ENCODE measurements at regions of chr10 and their contacts with region 1.

Region 1: DNA sequence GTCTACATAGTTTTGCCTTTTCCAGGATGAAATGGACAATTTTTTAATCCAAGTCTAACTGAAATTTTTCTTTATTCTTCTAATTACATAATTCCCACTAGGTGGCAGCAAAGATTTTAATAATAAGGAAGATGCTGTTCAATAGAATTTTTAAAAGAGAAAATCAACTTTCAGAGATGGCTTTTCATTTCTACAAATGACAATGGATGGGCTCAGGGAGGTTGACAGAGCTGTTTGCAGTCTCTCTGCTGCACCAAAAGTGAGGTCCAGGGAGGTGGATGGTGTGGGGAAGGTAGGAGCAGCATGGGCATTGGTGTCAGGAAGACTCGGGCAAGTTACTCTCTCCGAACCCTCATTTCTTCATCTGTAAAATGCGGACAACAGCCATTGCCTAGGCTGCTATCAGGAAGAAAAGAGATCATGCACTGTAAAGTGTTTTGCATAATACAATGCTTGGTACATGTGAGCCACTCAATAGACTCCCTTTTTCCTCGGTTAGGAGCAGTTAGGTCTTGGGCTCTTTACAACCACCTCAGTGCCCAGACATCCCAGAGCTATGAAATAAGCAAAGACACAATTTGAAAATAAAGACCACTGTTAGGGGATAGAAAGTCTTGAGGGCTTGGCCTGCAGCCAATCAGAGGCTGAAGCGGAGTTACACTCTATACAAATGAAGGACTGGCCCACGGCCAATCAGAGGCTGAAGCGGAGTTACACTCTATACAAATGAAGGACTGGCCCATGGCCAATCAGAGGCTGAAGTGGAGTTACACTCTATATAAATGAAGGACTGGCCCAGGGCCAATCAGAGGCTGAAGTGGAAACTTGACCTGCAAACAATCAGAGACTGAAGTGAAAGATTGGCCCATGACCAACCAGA is 107.1 kb downstream of the ABLIM1 start:
- DNase-seq: no peak
- H3K4me3 Mint-ChIP-seq: no peak overlapping the region
- H3K27ac Mint-ChIP-seq: no peak overlapping the region
- H3K4me1 Mint-ChIP-seq: peaks cover 19% of the 10 kb centered on the region
- H3K27me3 Mint-ChIP-seq: peaks cover 2% of the 10 kb centered on the region

Region 2: DNA sequence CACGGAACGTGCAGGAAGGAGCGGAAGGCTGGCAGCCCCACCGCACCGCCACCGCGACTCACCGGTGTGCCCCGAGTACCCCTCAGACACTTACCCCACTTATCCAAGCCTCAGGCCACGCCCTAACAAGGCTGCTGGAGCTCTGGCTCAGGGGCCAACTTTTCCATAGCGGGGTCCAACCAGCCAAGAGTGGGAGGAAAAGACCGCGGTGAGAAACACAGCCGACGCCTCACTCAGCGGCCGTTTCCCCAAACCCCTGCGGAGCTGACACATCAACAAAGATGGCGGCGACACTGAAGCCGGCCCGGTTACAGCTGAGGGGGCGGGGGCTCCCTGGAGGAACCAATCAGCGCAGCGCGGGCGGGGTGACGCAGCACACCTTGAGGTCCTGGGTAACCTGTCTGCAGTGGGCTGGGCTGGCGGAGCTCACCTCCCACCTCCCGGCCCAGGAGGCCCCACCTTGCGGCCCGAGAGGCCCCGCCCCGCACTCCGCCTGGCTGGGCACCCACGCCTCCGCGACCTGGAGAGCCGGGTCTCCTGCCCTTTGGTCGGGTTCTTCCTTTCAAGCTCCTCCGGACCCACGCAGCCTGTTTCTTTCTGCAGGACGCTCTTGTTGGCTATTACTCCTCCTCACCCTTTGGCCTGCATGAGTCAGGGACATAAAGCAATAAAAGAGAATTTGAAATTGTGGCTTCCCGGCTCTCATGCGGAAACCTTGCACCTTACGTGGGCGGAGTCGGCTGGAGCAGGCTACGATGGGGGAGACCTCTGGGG is 376.9 kb before region 1 on chr10 and contains the start of gene CCDC186:
- intact Hi-C with region 1: loop called (anchors 10 kb)
- DNase-seq: peak; percentile 95
- H3K4me3 Mint-ChIP-seq: peak within 1 kb of the TSS; percentile 97
- H3K27ac Mint-ChIP-seq: peak within 1 kb of the TSS; percentile 95
- H3K4me1 Mint-ChIP-seq: peaks cover 24% of the 10 kb centered on the region
- H3K27me3 Mint-ChIP-seq: peaks cover 26% of the 10 kb centered on the region
- total RNA-seq, gene CCDC186: 11.3 and 13.9 TPM in 2 replicates

Region 3: GRCh38 chr10:114470956-114471905 is 79.8 kb before region 1 on chr10:
- intact Hi-C with region 1: loop called (anchors 1 kb)
- DNase-seq: peak; percentile 48
- H3K4me3 Mint-ChIP-seq: no peak overlapping the region
- H3K27ac Mint-ChIP-seq: no peak overlapping the region
- H3K4me1 Mint-ChIP-seq: peaks cover 15% of the 10 kb centered on the region
- H3K27me3 Mint-ChIP-seq: no peaks in the 10 kb centered on the region

Region 4: DNA sequence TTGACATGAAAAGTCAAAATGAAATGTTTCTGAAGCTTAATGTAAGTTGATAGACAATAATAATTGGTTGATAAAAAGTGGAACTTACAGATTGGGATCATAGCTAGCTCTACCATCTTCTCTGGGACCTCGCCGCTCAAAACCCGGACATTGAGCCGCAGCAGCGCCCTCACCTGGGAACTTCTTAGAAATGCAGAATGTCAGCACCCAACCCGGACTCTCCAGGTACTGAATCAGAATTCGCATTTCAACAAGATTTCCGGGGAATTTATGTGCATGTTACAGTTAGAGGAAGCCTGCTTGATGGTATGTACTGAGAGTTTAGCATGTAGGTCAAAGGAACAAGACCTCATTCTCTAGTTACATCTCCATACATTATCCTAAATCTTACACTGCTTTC is 143.8 kb after region 1 on chr10:
- intact Hi-C with region 1: loop called (anchors 1 kb)
- DNase-seq: no peak
- H3K4me3 Mint-ChIP-seq: no peak overlapping the region
- H3K27ac Mint-ChIP-seq: no peak overlapping the region
- H3K4me1 Mint-ChIP-seq: peaks cover 11% of the 10 kb centered on the region
- H3K27me3 Mint-ChIP-seq: peaks cover 27% of the 10 kb centered on the region

Region 5: DNA sequence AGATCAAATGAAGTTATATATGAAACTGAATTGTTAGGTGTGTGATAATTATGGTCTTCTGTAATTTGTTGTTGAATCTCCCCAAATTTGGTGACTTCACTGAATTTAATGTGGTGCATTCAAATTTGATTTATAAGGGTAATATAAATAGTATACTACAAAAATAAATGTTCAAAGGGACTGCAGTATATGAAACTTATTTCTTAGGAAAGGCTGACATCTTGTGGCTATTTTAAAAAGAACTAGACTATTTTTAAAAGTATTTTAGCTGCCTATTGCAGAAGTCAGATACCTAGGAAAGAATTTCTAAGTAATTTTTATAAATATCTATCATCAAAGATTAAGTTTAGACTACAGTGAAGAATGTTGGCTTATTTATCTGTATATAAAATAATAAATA is 578.8 kb after region 1 on chr10:
- intact Hi-C with region 1: loop called (anchors 10 kb)
- DNase-seq: no peak
- H3K4me3 Mint-ChIP-seq: no peak overlapping the region
- H3K27ac Mint-ChIP-seq: no peak overlapping the region
- H3K4me1 Mint-ChIP-seq: no peaks in the 10 kb centered on the region
- H3K27me3 Mint-ChIP-seq: no peaks in the 10 kb centered on the region